ENCODE measurements at regions of chr5 and their contacts with region 1.

Region 1: DNA sequence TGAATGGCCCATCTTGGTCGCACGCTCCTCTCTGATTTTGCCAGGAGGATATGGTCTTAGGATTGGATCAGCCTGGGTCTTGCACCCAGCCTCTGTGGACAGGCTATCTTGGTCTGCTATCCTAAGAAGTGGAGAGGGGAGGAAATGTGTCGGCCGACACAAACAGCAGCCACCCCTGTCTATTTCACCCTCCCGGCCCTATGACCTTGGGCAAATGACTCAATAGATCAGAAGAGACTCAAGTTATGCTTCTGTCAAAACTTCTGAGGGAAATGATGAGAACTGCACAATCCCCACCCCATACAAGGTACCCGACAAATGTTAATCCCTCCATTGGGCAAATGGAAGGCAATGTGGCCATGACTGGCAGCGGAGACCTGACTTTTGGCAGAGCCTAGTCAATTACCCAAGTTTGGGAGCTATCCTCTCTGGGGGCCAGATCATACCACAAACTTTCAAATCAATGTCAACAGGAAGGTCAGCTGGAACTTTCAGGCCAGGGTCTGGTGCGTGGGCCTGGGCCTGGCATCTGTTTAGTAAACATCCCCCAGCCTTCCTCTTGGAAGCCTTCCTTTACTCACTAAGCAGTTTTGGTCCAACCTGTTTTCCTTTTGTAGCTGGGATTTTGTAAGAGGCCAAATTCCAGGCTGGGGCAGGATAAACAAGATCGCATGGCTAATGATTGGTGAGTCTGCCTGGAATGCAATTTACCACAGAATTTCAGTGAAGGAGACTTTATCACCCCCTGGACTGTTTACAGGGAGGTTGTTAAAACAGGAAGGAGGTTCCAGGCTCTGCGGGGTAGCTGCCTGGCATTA is 64.2 kb upstream of the CPEB4 start:
- DNase-seq: peak; percentile 82 to 98
- H3K4me3 ChIP-seq: peak overlapping the region; percentile 25; the same call in 1 of the 2 replicates
- H3K27ac ChIP-seq: peak overlapping the region; percentile 77
- H3K4me1 ChIP-seq: peaks cover 58% of the 10 kb centered on the region
- H3K27me3 ChIP-seq: no peaks in the 10 kb centered on the region
- CTCF ChIP-seq: no peak

Region 2: GRCh38 chr5:173745123-173745522 is 78.8 kb before region 1 on chr5:
- CTCF ChIA-PET with region 1: no interaction called
- POLR2A ChIA-PET with region 1: no interaction called
- intact Hi-C with region 1: loop called (anchors 5 kb)
- DNase-seq: peak in 1 of 2 experiments; percentile 41
- H3K4me3 ChIP-seq: peak overlapping the region; percentile 8; the same call in 1 of the 2 replicates
- H3K27ac ChIP-seq: peak overlapping the region; percentile 80
- H3K4me1 ChIP-seq: peaks cover 27% of the 10 kb centered on the region
- H3K27me3 ChIP-seq: no peaks in the 10 kb centered on the region
- CTCF ChIP-seq: no peak

Region 3: DNA sequence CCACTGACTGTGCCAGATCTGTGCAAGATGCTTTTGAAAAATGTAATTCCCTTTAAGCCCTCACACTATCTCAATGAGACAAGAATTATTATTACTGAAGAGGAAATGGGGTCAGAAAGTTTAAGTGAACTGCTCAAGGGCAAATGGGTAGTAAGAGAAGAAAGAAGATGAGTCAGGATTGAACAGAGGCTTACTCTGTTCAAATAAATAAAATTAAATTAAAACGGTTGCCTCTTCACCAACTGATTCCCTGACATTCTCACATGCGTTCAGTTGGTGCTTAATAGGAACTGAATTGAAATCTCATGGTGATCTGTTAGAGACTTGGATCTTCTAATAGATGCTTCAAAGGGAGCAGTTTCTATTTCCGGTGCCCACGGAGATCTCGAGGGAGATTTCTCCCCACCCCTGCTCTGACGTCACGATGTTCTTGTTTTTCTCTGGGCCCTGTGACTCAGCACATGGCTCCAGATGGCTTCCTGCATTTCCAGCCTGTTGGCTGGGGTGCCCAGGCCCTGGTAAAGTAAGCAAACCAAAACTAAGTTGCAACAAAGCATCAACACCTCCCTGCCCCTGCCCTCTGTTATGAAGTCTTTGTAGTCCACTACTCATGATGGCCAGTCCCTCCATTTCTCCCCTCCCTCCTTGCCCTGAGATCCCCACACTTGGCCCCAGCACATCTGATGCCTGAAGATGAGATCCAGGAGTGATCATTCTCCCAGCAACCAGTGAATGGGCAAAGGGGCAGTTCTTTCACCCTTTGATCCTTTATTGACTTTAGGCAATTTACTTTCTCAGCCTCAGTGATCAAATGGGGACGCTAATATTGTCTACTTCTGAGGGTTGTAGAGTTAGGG is 41.9 kb before region 1 on chr5:
- CTCF ChIA-PET with region 1: no interaction called
- POLR2A ChIA-PET with region 1: no interaction called
- intact Hi-C with region 1: loop called (anchors 1 kb)
- DNase-seq: peak; percentile 56 to 62
- H3K4me3 ChIP-seq: peak overlapping the region; percentile 7; the same call in 1 of the 2 replicates
- H3K27ac ChIP-seq: peak overlapping the region; percentile 78
- H3K4me1 ChIP-seq: peaks cover 47% of the 10 kb centered on the region
- H3K27me3 ChIP-seq: no peaks in the 10 kb centered on the region
- CTCF ChIP-seq: no peak

Region 4: DNA sequence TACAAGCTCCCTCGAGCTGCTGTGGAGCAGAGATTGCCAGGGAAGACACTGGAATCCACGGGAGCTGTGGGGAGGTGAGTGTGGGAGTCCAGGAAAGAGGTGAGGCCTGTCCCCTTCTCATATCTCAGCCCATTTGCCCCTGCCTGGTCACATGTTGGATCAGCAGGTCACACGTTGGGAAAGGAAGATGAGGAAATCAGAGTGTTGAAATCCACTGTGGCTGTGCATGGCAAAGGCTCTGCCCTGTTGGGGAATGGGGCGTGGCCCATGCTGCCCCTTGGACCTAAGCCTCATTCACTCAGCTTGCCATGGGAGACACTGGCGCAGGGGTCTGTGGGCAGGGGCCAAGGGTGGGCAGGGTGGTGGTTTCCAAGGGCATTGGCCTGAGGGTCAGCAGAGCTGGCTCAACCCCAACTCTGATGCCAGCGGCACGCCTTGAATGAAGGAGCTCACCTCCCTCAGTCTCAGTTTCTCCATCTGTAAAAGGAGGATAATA is 21.2 kb before region 1 on chr5:
- CTCF ChIA-PET with region 1: no interaction called
- POLR2A ChIA-PET with region 1: no interaction called
- intact Hi-C with region 1: loop called (anchors 2 kb)
- DNase-seq: peak; percentile 63 to 86
- H3K4me3 ChIP-seq: no peak overlapping the region
- H3K27ac ChIP-seq: 0 out of 2 replicates have a peak overlapping the region, but pooled peaks have one; percentile 3
- H3K4me1 ChIP-seq: peaks cover 19% of the 10 kb centered on the region
- H3K27me3 ChIP-seq: no peaks in the 10 kb centered on the region
- CTCF ChIP-seq: no peak

Region 5: DNA sequence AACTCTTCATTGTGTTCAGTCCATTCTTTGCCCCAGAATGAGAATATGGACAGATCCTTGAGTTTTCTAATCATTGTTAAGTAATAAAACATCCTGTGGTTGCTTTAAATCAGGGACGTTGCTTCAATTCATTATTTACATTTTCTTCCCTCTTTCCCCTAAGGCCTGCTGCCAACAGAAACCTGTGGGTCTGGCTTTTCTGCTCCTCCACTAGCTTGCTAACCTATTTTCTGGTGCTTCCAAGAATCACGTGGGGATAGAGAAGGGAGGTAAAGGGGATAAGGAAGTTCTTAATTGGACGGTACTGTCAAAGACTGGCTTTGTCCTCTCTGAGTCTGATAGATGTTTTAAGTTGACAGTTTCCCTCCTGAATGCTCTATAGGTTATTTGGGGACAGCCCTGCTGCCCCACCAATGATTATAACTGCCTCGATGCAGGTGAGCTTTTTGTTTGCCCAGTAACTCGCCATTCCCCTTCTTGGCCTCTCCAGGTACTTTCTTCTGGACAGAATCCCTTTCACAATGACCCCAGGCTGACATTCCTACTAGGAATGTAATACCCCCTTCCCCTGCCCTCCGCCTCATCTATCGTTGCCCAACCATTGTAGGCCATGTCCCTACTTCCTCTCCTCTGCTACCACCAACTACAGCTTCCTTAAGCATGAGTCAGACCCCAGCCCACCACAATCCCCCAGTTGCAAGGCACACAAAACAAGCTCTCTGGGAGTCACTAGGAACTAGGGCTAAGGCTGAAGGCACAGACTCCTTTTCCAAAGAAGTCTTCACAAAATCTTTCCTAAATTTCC is 44.4 kb after region 1 on chr5:
- CTCF ChIA-PET with region 1: no interaction called
- POLR2A ChIA-PET with region 1: no interaction called
- intact Hi-C with region 1: loop called (anchors 1 kb)
- DNase-seq: peak; percentile 72 to 96
- H3K4me3 ChIP-seq: peak overlapping the region; percentile 35; the same call in 1 of the 2 replicates
- H3K27ac ChIP-seq: peak overlapping the region; percentile 84
- H3K4me1 ChIP-seq: peaks cover 61% of the 10 kb centered on the region
- H3K27me3 ChIP-seq: no peaks in the 10 kb centered on the region
- CTCF ChIP-seq: no peak

Region 6: GRCh38 chr5:173917788-173918786 is 94.2 kb after region 1 on chr5:
- CTCF ChIA-PET with region 1: no interaction called
- POLR2A ChIA-PET with region 1: interaction called, 5 read pairs
- intact Hi-C with region 1: loop called (anchors 1 kb)
- DNase-seq: peak; percentile 53 to 76
- H3K4me3 ChIP-seq: peak overlapping the region; percentile 79
- H3K27ac ChIP-seq: peak overlapping the region; percentile 86
- H3K4me1 ChIP-seq: peaks cover 29% of the 10 kb centered on the region
- H3K27me3 ChIP-seq: no peaks in the 10 kb centered on the region
- CTCF ChIP-seq: peak; percentile 43; the same call in 1 of the 2 replicates